Psoas muscle (tissue), 8 donors: ENCODE measurements at regions of chr21 and their contacts with region 1.

Region 1: DNA sequence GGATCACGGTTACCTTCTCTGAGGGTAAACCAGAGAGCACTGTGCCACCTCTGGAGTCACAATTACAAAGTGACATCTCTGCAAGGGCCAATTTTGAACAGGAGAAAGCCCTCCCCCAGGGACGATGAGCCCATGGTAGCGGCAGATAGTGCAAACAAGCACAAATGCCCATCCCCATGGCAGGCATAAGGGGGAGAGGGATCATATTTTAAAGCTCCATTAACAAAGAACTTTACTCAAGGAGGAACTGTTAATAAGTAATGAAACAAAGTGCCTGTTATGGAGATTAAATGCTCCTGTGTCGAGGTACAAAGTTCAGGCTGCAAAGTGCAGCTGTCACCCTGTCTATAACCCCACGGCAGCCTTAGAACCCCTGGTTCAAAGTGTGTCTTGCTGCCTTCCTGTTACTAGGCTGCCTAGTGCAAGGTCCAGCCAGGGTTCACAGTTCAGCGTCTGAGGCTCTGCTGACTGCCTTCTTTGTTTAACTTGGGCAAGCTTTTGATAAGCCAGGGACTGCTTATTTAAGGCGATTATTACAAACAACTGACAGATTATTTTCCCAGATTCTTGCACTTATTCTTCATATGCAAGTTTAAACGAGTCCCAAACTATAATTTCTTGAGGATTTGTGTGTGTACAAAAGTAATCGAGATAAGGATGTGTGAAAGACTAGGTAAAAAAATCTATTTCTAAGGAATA is 75.7 kb upstream of the NRIP1 start:
- DNase-seq: no peak
- ATAC-seq: peak in 3 of 4 donors; percentile 39 to 63 (median 53)
- H3K4me3 ChIP-seq: no peak overlapping the region
- H3K27ac ChIP-seq: peak overlapping the region; percentile 59
- H3K4me1 ChIP-seq: peaks cover 48% of the 10 kb centered on the region
- H3K27me3 ChIP-seq: no peaks in the 10 kb centered on the region
- CTCF ChIP-seq: no peak

Region 2: GRCh38 chr21:15289896-15290841 is 149.7 kb after region 1 on chr21:
- intact Hi-C with region 1: loop called in 1 of 2 experiments (anchors 10 kb)
- DNase-seq: peak; percentile 46 to 79
- ATAC-seq: peak; percentile 84 to 93 (median 89)
- H3K4me3 ChIP-seq: peak overlapping the region; percentile 54
- H3K27ac ChIP-seq: no peak overlapping the region
- H3K4me1 ChIP-seq: peaks cover 10% of the 10 kb centered on the region
- H3K27me3 ChIP-seq: no peaks in the 10 kb centered on the region
- CTCF ChIP-seq: no peak